B cell (primary cell): ENCODE measurements at regions of chr20 and their contacts with region 1.

Region 1: GRCh38 chr20:4956200-4956810 is 45.0 kb downstream of the SLC23A2 start:
- DNase-seq: peak; percentile 74
- ATAC-seq: peak; percentile 56
- H3K4me3 ChIP-seq: no peak overlapping the region
- H3K4me3 Mint-ChIP-seq: no peak overlapping the region
- H3K27ac ChIP-seq: no peak overlapping the region
- H3K27ac Mint-ChIP-seq: no peak overlapping the region
- H3K4me1 ChIP-seq: peaks cover 4 to 6% of the 10 kb centered on the region in 2 donors
- H3K4me1 Mint-ChIP-seq: peaks cover 22% of the 10 kb centered on the region
- H3K27me3 ChIP-seq: no peaks in the 10 kb centered on the region
- H3K27me3 Mint-ChIP-seq: no peaks in the 10 kb centered on the region
- CTCF ChIP-seq: peak; percentile 89

Region 2: GRCh38 chr20:4418141-4418540 is 538.2 kb before region 1 on chr20:
- CTCF ChIA-PET with region 1: no interaction called
- POLR2A ChIA-PET with region 1: no interaction called
- intact Hi-C with region 1: no loop called
- DNase-seq: no peak
- ATAC-seq: no peak
- H3K4me3 ChIP-seq: no peak overlapping the region
- H3K4me3 Mint-ChIP-seq: no peak overlapping the region
- H3K27ac ChIP-seq: no peak overlapping the region
- H3K27ac Mint-ChIP-seq: no peak overlapping the region
- H3K4me1 ChIP-seq: no peaks in the 10 kb centered on the region
- H3K4me1 Mint-ChIP-seq: peaks cover 3% of the 10 kb centered on the region
- H3K27me3 ChIP-seq: no peaks in the 10 kb centered on the region
- H3K27me3 Mint-ChIP-seq: no peaks in the 10 kb centered on the region
- CTCF ChIP-seq: no peak

Region 3: GRCh38 chr20:4607287-4607713 is 349.0 kb before region 1 on chr20:
- CTCF ChIA-PET with region 1: interaction called, 5 read pairs
- POLR2A ChIA-PET with region 1: no interaction called
- intact Hi-C with region 1: loop called (anchors 1 kb)
- DNase-seq: peak; percentile 79
- ATAC-seq: peak; percentile 94
- H3K4me3 ChIP-seq: no peak overlapping the region
- H3K4me3 Mint-ChIP-seq: no peak overlapping the region
- H3K27ac ChIP-seq: no peak overlapping the region
- H3K27ac Mint-ChIP-seq: peak overlapping the region; percentile 32
- H3K4me1 ChIP-seq: peaks cover 5 to 7% of the 10 kb centered on the region in 2 donors
- H3K4me1 Mint-ChIP-seq: peaks cover 12% of the 10 kb centered on the region
- H3K27me3 ChIP-seq: peaks cover 0 to 12% (median 0%) of the 10 kb centered on the region in 4 experiments
- H3K27me3 Mint-ChIP-seq: peaks cover 15% of the 10 kb centered on the region
- CTCF ChIP-seq: peak; percentile 99

Region 4: GRCh38 chr20:4740774-4741431 is 215.4 kb before region 1 on chr20:
- CTCF ChIA-PET with region 1: interaction called, 15 read pairs
- POLR2A ChIA-PET with region 1: no interaction called
- intact Hi-C with region 1: no loop called
- DNase-seq: peak; percentile 76
- ATAC-seq: peak; percentile 56
- H3K4me3 ChIP-seq: no peak overlapping the region
- H3K4me3 Mint-ChIP-seq: no peak overlapping the region
- H3K27ac ChIP-seq: no peak overlapping the region
- H3K27ac Mint-ChIP-seq: no peak overlapping the region
- H3K4me1 ChIP-seq: peaks cover 0 to 3% of the 10 kb centered on the region in 2 donors
- H3K4me1 Mint-ChIP-seq: peaks cover 6% of the 10 kb centered on the region
- H3K27me3 ChIP-seq: peaks cover 0 to 3% (median 1%) of the 10 kb centered on the region in 4 experiments
- H3K27me3 Mint-ChIP-seq: peaks cover 14% of the 10 kb centered on the region
- CTCF ChIP-seq: peak; percentile 94

Region 5: DNA sequence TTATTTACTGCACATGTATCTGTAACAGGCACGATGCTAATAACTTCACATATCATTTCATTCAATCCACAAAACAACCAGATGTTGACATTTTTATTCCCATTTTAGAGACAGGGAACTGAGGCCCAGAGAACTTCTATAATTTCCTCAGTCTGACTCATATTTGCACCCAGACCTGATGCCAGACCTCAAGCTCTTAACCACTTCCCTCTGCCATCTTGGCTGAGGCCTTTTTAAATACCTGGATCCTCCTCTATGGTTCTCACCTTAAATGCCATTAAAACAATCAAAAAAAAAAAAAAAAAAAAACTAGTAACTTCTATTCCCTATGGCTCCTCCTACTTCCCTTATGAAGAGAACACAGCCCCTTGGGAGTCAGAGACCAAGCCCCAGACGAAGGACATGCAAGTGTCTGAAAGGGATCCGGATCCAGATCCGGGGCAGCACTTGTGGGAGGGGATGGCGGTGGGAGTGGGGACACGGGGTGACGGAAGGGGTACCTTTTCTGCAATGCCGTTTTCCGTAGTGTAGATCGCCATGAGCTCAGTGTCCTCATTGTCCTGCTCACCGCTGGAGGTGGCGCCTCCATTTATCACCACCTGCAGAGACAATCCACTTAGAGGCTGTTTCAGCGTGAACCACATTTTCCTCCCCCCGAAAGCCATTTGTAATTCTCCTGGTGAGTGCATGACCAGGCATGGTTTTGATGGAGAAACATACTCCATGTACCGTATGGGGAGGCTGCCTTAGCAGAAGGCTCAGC is 43.7 kb before region 1 on chr20:
- CTCF ChIA-PET with region 1: interaction called, 12 read pairs
- POLR2A ChIA-PET with region 1: no interaction called
- intact Hi-C with region 1: no loop called
- DNase-seq: no peak
- ATAC-seq: no peak
- H3K4me3 ChIP-seq: no peak overlapping the region
- H3K4me3 Mint-ChIP-seq: no peak overlapping the region
- H3K27ac ChIP-seq: no peak overlapping the region
- H3K27ac Mint-ChIP-seq: peak overlapping the region; percentile 50
- H3K4me1 ChIP-seq: no peaks in the 10 kb centered on the region
- H3K4me1 Mint-ChIP-seq: peaks cover 17% of the 10 kb centered on the region
- H3K27me3 ChIP-seq: no peaks in the 10 kb centered on the region
- H3K27me3 Mint-ChIP-seq: no peaks in the 10 kb centered on the region
- CTCF ChIP-seq: no peak

Region 6: GRCh38 chr20:4966826-4967751 is 10.8 kb after region 1 on chr20:
- CTCF ChIA-PET with region 1: interaction called, 21 read pairs
- POLR2A ChIA-PET with region 1: interaction called, 3 read pairs
- intact Hi-C with region 1: loop called (anchors 2 kb)
- DNase-seq: no peak
- ATAC-seq: no peak
- H3K4me3 ChIP-seq: no peak overlapping the region
- H3K4me3 Mint-ChIP-seq: no peak overlapping the region
- H3K27ac ChIP-seq: peak overlapping the region in 1 of 2 donors; percentile 46
- H3K27ac Mint-ChIP-seq: peak overlapping the region; percentile 4
- H3K4me1 ChIP-seq: peaks cover 5 to 8% of the 10 kb centered on the region in 2 donors
- H3K4me1 Mint-ChIP-seq: peaks cover 13% of the 10 kb centered on the region
- H3K27me3 ChIP-seq: no peaks in the 10 kb centered on the region
- H3K27me3 Mint-ChIP-seq: no peaks in the 10 kb centered on the region
- CTCF ChIP-seq: no peak

Region 7: GRCh38 chr20:4985658-4986057 is 29.4 kb after region 1 on chr20:
- CTCF ChIA-PET with region 1: interaction called, 16 read pairs
- POLR2A ChIA-PET with region 1: interaction called, 3 read pairs
- intact Hi-C with region 1: no loop called
- DNase-seq: peak; percentile 67
- ATAC-seq: peak; percentile 61
- H3K4me3 ChIP-seq: peak overlapping the region in 1 of 5 experiments; percentile 19
- H3K4me3 Mint-ChIP-seq: peak overlapping the region; percentile 82
- H3K27ac ChIP-seq: peak overlapping the region; percentile 73 to 75
- H3K27ac Mint-ChIP-seq: peak overlapping the region; percentile 91
- H3K4me1 ChIP-seq: peaks cover 60 to 69% of the 10 kb centered on the region in 2 donors
- H3K4me1 Mint-ChIP-seq: peaks cover 71% of the 10 kb centered on the region
- H3K27me3 ChIP-seq: no peaks in the 10 kb centered on the region
- H3K27me3 Mint-ChIP-seq: no peaks in the 10 kb centered on the region
- CTCF ChIP-seq: no peak